WTC11 (cell line): ENCODE measurements at regions of chr1 and their contacts with region 1.

Region 1: GRCh38 chr1:109239580-109240095 is 9.7 kb upstream of the CELSR2 start:
- DNase-seq: peak; percentile 76
- ATAC-seq: no peak; the same call in 1 of the 2 replicates
- H3K4me3 Mint-ChIP-seq: peak overlapping the region; percentile 22; the same call in 1 of the 2 replicates
- H3K27ac Mint-ChIP-seq: peak overlapping the region; percentile 92
- H3K4me1 Mint-ChIP-seq: peaks cover 54% of the 10 kb centered on the region
- H3K27me3 Mint-ChIP-seq: no peaks in the 10 kb centered on the region; the same call in 1 of the 2 replicates
- CTCF ChIP-seq: peak; percentile 48

Region 2: GRCh38 chr1:109193653-109194590 is 45.7 kb before region 1 on chr1:
- CTCF ChIA-PET with region 1: interaction called, 24 read pairs
- POLR2A ChIA-PET with region 1: no interaction called
- DNase-seq: peak; percentile 78
- ATAC-seq: peak; percentile 71
- H3K4me3 Mint-ChIP-seq: no peak overlapping the region
- H3K27ac Mint-ChIP-seq: no peak overlapping the region
- H3K4me1 Mint-ChIP-seq: peaks cover 3% of the 10 kb centered on the region
- H3K27me3 Mint-ChIP-seq: no peaks in the 10 kb centered on the region; the same call in 1 of the 2 replicates
- CTCF ChIP-seq: peak; percentile 70

Region 3: GRCh38 chr1:109213785-109214468 is 25.7 kb before region 1 on chr1 and contains the start of gene SARS1:
- CTCF ChIA-PET with region 1: interaction called, 36 read pairs
- POLR2A ChIA-PET with region 1: interaction called, 31 read pairs
- DNase-seq: peak; percentile 89
- ATAC-seq: peak; percentile 94
- H3K4me3 Mint-ChIP-seq: peak within 1 kb of the TSS; percentile 99
- H3K27ac Mint-ChIP-seq: peak within 1 kb of the TSS; percentile 92
- H3K4me1 Mint-ChIP-seq: peaks cover 21% of the 10 kb centered on the region
- H3K27me3 Mint-ChIP-seq: peaks cover 2% of the 10 kb centered on the region; the same call in 1 of the 2 replicates
- CTCF ChIP-seq: no peak
- total RNA-seq, gene SARS1: 126 to 149 TPM (median 129 TPM) in 3 replicates

Region 4: GRCh38 chr1:109263597-109264398 is 24.2 kb after region 1 on chr1:
- CTCF ChIA-PET with region 1: interaction called, 35 read pairs
- POLR2A ChIA-PET with region 1: interaction called, 3 read pairs
- DNase-seq: peak; percentile 96
- ATAC-seq: peak; percentile 93
- H3K4me3 Mint-ChIP-seq: no peak overlapping the region
- H3K27ac Mint-ChIP-seq: no peak overlapping the region
- H3K4me1 Mint-ChIP-seq: peaks cover 21% of the 10 kb centered on the region
- H3K27me3 Mint-ChIP-seq: no peaks in the 10 kb centered on the region
- CTCF ChIP-seq: peak; percentile 97

Region 5: DNA sequence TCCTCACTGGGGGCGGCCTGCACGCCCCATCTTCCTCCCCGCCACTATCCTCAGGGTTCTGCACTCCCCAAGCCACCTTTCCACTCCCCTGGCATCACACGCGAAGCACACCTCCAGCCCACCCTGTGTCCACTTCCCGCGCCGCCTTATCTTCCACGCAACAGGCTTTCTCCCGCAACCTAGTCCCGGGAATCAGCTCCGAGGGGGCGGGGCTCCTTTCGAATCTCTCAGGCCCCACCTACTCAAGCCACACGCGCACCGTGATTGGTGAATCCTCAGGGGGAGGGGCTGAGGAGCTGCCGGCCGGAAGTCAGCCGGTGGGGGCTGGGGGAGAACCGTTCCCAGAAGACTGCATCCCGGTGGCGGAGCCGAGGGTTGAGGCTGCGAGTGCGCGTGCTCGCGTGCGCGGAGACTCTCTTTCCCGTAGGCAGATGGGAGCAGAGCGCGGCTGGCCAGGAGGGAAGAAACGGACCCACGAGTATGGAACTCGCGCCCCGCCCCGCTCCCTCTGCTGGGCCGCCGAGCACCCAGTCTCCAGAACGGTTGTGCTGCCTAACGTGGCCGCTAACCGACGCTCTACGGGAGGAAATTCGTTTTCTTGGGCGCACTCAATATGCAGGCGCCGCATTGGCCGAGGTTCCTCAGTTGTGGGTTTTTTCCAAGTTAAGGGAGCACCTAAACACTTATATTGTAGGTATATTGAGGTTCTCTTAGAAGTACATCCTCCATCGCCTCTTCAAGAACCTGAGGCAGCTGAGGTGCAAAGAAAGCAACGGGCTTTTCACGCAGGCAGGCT is 43.5 kb after region 1 on chr1 and contains the start of gene PSRC1:
- CTCF ChIA-PET with region 1: interaction called, 12 read pairs
- POLR2A ChIA-PET with region 1: interaction called, 3 read pairs
- DNase-seq: peak; percentile 96
- ATAC-seq: peak; percentile 92
- H3K4me3 Mint-ChIP-seq: peak within 1 kb of the TSS; percentile 99
- H3K27ac Mint-ChIP-seq: peak within 1 kb of the TSS; percentile 97
- H3K4me1 Mint-ChIP-seq: peaks cover 42% of the 10 kb centered on the region
- H3K27me3 Mint-ChIP-seq: no peaks in the 10 kb centered on the region; the same call in 1 of the 2 replicates
- CTCF ChIP-seq: no peak
- total RNA-seq, gene PSRC1: 56.9 to 68.4 TPM (median 64.1 TPM) in 3 replicates